Adrenal gland (tissue), 19 donors: ENCODE measurements at regions of chr2 and their contacts with region 1.

Region 1: DNA sequence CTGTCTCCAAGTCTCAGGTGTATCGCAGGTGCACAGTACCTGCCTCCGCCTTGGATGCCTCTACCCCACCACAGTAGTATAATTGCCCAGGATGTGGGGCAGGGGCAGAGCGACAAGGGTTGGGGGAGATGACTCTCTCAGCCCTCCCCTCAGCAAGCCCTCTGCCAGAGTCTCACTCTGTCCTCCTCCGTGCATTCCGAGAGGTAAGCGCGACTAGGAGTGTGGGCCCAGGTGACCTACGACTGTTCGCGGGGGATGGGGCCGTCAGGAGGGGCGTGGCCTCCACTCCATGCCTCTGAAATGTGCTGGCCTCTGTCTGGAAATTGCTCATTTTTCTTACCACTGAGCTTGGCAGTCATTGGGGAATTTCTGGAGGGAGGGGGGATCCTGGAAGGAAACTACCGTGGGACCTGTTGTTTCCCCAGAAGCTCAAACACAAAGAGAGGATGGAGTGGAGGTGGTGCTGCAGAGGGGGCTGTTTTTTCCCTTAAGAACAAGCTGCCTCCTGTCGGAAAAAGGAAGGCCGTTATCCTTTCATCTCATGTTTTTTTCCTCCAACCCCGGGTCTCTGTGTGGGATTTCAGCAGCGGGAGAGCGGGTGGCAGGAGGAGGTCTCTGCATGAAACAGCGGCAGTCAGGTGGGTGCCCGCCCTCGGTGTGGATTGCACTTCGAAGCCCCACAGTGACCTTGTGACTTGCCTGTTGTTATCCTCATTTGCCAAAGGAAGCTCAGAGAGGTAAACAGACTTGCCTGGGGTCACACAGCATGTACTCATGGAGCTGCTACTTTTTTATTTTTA is 13.0 kb upstream of the RALB start:
- DNase-seq: peak; percentile 78 to 93 (median 88)
- H3K4me3 ChIP-seq: peak overlapping the region in 1 of 4 donors; percentile 19
- H3K27ac ChIP-seq: peak overlapping the region in 3 of 5 donors; percentile 80 to 89 (median 88)
- H3K4me1 ChIP-seq: peaks cover 7 to 20% of the 10 kb centered on the region in 2 donors
- H3K27me3 ChIP-seq: no peaks in the 10 kb centered on the region
- CTCF ChIP-seq: no peak
- POLR2A ChIP-seq: no peak

Region 2: GRCh38 chr2:120300385-120300784 is 60.7 kb after region 1 on chr2:
- intact Hi-C with region 1: no loop called
- DNase-seq: no peak
- H3K4me3 ChIP-seq: no peak overlapping the region
- H3K27ac ChIP-seq: no peak overlapping the region
- H3K4me1 ChIP-seq: no peaks in the 10 kb centered on the region
- H3K27me3 ChIP-seq: no peaks in the 10 kb centered on the region
- CTCF ChIP-seq: no peak
- POLR2A ChIP-seq: no peak

Region 3: GRCh38 chr2:120312861-120313694 is 73.4 kb after region 1 on chr2:
- intact Hi-C with region 1: loop called in 1 of 2 experiments (anchors 5 kb)
- DNase-seq: peak; percentile 82 to 92 (median 88)
- H3K4me3 ChIP-seq: peak overlapping the region in 2 of 4 donors; percentile 27 to 51
- H3K27ac ChIP-seq: peak overlapping the region in 3 of 5 donors; percentile 35 to 71 (median 57)
- H3K4me1 ChIP-seq: peaks cover 0 to 10% of the 10 kb centered on the region in 2 donors
- H3K27me3 ChIP-seq: no peaks in the 10 kb centered on the region
- CTCF ChIP-seq: peak; percentile 86 to 95 (median 93)
- POLR2A ChIP-seq: no peak

Region 4: GRCh38 chr2:120712180-120712681 is 472.5 kb after region 1 on chr2:
- intact Hi-C with region 1: no loop called
- DNase-seq: no peak
- H3K4me3 ChIP-seq: no peak overlapping the region
- H3K27ac ChIP-seq: no peak overlapping the region
- H3K4me1 ChIP-seq: no peaks in the 10 kb centered on the region
- H3K27me3 ChIP-seq: no peaks in the 10 kb centered on the region
- CTCF ChIP-seq: no peak
- POLR2A ChIP-seq: no peak